ENCODE measurements at regions of chr14 and their contacts with region 1.

Region 1: DNA sequence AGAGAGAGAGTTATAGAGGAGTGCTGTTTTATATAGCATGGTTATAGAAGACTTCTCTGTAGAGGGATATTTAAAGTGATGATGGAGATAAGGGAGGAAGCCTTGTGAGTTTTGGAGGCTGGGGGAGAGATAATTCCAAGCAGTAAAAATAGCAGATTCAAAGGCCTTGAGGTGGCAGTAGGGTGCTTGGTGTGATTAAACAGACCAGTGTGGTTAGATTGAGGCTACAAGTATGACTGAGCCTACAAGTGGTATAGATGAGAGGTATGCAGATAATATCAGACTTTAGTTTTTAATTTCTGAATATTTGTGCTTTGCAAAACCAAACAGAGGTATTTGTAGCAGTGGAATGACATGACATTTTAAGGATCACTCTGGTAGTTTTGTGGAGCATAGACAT is 20.3 kb downstream of the FANCM start:
- DNase-seq: peak; percentile 8
- H3K4me3 ChIP-seq: no peak overlapping the region
- H3K27ac ChIP-seq: no peak overlapping the region
- H3K4me1 ChIP-seq: no peaks in the 10 kb centered on the region
- H3K27me3 ChIP-seq: no peaks in the 10 kb centered on the region
- CTCF ChIP-seq: peak in 1 of 2 donors; percentile 31

Region 2: DNA sequence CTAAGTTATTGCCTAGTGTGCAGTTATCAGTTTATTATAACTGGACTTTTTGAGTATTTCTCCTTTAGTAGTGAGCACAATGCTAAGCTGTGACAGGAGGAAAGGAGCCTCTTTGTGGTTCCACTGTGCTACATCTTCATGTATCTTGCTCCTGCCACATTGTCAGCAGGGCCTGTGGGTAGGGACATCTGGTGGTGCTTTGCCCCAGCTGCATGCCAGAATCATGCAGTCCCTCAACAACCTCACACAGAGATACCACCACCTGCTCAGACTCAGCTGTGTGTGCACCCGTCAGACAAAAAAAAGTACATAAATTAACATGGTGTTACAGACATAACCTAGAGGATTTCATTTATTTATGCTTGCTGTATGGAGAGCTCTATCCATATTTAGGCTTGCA is 45.8 kb after region 1 on chr14:
- CTCF ChIA-PET with region 1: no interaction called
- dilution Hi-C with region 1: no loop called
- in situ Hi-C with region 1: no loop called
- intact Hi-C with region 1: loop called (anchors 2 kb)
- DNase-seq: no peak
- H3K4me3 ChIP-seq: no peak overlapping the region
- H3K27ac ChIP-seq: no peak overlapping the region
- H3K4me1 ChIP-seq: peaks cover 18% of the 10 kb centered on the region
- H3K27me3 ChIP-seq: no peaks in the 10 kb centered on the region
- CTCF ChIP-seq: peak; percentile 10 to 52

Region 3: GRCh38 chr14:45267071-45267470 is 111.0 kb after region 1 on chr14:
- CTCF ChIA-PET with region 1: no interaction called
- dilution Hi-C with region 1: no loop called
- in situ Hi-C with region 1: no loop called
- intact Hi-C with region 1: loop called (anchors 1 kb)
- DNase-seq: no peak
- H3K4me3 ChIP-seq: no peak overlapping the region
- H3K27ac ChIP-seq: no peak overlapping the region
- H3K4me1 ChIP-seq: no peaks in the 10 kb centered on the region
- H3K27me3 ChIP-seq: no peaks in the 10 kb centered on the region
- CTCF ChIP-seq: no peak

Measured in mammary epithelial cell (primary cell).